Spleen (tissue), 13 donors: ENCODE measurements at regions of chr16 and their contacts with region 1.

Region 1: DNA sequence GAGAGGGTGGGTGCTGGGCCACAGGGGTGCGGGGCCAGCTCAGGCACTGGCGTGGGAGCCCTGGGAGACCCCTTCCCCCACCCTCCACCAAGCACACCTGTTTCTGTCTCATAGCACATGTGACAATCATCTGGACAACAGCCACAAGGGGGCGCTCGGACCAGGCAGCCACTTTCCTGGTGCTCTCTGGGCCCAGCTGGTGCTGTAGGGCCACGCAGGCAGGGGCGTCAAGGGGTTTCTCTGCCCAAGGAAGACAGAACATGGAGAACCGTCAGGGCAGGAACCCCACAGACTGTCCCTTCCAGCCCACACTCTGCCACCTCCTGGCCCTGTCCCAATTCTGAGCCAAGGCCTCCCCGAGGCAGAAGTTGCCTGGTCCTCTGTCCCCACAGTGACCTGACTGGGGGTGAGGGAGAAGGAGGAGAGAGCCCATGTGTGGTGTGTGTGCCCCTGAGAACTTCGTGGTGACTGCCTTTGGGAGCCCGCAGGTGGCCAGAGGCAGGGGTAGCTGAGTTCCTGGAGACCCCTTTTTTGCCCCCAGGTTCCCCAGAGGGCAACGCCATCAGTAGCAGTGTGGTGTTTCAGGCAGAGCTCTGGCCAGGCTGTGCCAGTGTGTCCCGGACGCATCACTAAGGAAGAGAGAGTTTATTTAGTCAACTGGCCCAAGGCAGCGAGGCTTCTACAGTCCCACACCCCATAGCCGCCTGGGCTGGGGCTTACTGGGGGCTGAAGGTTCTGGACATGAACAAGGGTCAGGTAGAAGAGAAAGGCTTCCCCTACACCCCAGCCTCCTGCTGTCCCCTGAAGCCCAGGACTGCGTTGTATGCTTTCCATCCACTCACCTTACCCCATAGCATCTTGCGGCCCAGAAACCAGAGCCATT is 3.1 kb upstream of the SETD6 start:
- DNase-seq: peak; percentile 93
- H3K4me3 ChIP-seq: no peak overlapping the region
- H3K27ac ChIP-seq: no peak overlapping the region
- H3K4me1 ChIP-seq: peaks cover 8 to 39% (median 21%) of the 10 kb centered on the region in 6 donors
- H3K27me3 ChIP-seq: peaks cover 0 to 4% (median 0%) of the 10 kb centered on the region in 7 donors
- CTCF ChIP-seq: peak; percentile 38 to 81 (median 63)
- POLR2A ChIP-seq: no peak

Region 2: DNA sequence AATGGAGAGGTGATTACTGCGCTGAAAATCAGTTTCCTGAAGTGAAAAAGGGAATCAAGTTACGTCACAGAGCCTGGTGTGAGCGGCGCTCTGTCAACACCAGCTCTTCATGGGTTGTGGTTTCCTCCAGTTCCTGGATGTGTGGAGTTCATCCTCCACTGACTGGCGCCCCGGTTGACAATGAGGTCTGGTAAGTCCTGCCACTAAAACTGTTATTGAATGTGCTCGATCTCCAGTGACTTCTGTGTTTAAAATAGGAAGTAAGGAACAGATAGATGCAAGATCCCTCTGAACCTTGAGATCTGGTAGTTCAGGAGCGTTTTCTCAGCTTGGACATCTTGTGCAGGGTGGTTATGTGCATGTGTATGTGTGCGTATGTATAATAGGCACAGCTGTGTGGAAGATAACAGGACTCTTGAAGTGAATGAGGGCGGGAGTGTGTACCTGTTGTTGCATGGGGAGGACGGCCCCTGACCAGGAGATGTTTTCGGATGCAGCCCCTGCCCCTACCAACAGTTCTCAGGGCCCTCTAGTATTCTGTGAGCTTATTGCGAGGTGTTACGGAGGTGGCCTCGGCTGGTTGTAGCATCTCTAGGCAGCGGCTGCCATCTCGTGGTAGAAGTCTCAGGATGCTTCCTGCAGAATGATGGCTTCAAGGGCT is 243.9 kb after region 1 on chr16:
- intact Hi-C with region 1: loop called (anchors 5 kb)
- DNase-seq: peak; percentile 87
- H3K4me3 ChIP-seq: peak overlapping the region in 3 of 8 donors; percentile 5 to 36 (median 13)
- H3K27ac ChIP-seq: peak overlapping the region in 2 of 8 donors; percentile 29 to 33
- H3K4me1 ChIP-seq: peaks cover 3 to 11% (median 9%) of the 10 kb centered on the region in 6 donors
- H3K27me3 ChIP-seq: no peaks in the 10 kb centered on the region
- CTCF ChIP-seq: peak; percentile 19 to 80 (median 58)
- POLR2A ChIP-seq: no peak